AG04449 (cell line): ENCODE measurements at regions of chr14 and their contacts with region 1.

Region 1: DNA sequence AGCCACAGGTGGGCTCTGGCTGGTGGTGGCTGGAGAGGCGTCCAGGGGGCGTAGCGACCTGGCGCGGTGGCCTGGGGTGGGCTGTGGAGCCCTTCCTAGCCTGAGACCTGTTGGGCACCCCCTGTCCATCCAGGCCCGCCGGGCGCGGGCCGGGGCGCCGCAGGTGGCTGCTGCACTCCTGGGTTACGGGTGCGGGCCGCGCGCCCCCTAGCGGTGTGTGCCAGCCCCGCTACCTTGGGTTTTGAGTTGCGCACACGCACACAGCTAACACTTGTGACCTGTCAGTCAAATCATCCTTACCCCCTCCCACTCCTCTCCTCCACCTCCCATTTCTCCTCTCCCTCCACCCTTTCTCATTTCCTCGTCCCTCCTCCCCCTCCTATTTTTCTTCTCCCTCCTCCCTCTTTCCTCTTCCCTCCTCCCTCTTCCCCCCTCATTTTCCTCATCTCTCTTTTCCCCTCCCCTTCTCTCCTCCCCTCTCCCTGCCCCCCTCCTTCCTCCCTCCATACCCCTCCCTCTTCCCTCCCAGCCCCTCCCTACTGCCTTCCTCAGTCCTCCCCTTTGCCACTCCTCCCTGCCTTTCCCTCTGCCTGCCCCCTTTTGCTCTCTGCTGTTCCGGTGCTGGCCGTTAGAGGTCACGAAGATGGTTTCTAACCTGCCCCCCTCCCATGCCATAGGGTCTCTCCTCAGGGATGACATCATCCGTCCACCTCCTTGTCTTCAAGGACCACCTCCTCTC is 2.3 kb downstream of the MEG3 start:
- DNase-seq: peak; percentile 31
- H3K4me3 ChIP-seq: peak overlapping the region; percentile 84
- CTCF ChIP-seq: peak; percentile 80

Region 2: GRCh38 chr14:100610511-100611217 is 217.5 kb before region 1 on chr14:
- CTCF ChIA-PET with region 1: no interaction called
- POLR2A ChIA-PET with region 1: no interaction called
- DNase-seq: no peak
- H3K4me3 ChIP-seq: no peak overlapping the region
- CTCF ChIP-seq: no peak

Region 3: GRCh38 chr14:100803226-100803625 is 25.0 kb before region 1 on chr14:
- CTCF ChIA-PET with region 1: no interaction called
- POLR2A ChIA-PET with region 1: no interaction called
- DNase-seq: no peak
- H3K4me3 ChIP-seq: no peak overlapping the region
- CTCF ChIP-seq: no peak

Region 4: DNA sequence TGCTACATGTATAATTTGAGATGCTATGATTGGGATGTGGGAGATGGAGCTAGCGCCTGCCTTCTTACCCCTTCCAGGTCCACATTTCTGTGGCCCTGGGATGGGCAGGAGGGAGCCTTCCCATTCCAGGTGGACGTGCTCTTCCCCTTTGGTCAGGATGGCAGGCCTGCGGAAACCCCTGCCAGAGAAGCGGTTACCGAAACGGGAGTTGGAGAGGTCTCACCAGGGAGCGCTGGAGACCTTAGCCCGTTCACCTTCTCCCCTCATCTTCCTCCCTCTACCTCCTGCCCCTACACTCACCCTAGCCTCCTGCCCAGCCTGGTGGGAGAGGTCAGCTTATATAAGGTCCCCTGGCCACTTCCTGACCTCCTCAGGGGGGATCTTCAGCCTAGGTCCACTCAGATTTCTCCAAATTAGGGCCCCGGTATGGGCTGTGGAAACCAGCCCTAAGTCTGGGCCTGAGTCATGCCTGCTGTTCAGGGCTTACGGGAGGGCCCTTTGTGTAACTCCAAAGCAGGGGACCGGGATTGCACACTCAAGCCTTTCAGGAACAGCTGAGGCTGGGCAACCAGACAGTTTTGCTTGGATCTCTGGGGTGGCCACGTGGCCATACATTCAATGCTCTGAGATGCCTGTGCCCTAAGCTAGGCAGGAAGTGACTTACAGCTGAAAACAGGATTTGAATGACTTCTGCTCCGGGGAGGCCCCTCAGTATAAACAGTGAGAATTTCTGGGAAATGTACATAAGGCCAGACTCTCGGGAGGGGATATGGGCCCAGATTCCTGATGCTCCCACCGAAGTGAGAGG is 12.5 kb before region 1 on chr14:
- CTCF ChIA-PET with region 1: interaction called, 3 read pairs
- POLR2A ChIA-PET with region 1: interaction called, 13 read pairs
- DNase-seq: peak; percentile 58
- H3K4me3 ChIP-seq: no peak overlapping the region
- CTCF ChIP-seq: no peak

Region 5: GRCh38 chr14:100842799-100843198 is 14.6 kb after region 1 on chr14:
- CTCF ChIA-PET with region 1: interaction called, 33 read pairs
- POLR2A ChIA-PET with region 1: interaction called, 8 read pairs
- DNase-seq: peak; percentile 86
- H3K4me3 ChIP-seq: no peak overlapping the region
- CTCF ChIP-seq: no peak

Region 6: GRCh38 chr14:100891501-100892445 is 63.6 kb after region 1 on chr14:
- CTCF ChIA-PET with region 1: no interaction called
- POLR2A ChIA-PET with region 1: no interaction called
- DNase-seq: no peak
- H3K4me3 ChIP-seq: no peak overlapping the region
- CTCF ChIP-seq: no peak

Region 7: GRCh38 chr14:101120641-101121507 is 292.7 kb after region 1 on chr14:
- CTCF ChIA-PET with region 1: no interaction called
- POLR2A ChIA-PET with region 1: no interaction called
- DNase-seq: no peak
- H3K4me3 ChIP-seq: no peak overlapping the region
- CTCF ChIP-seq: no peak